ENCODE measurements at regions of chr5 and their contacts with region 1.

Region 1: GRCh38 chr5:58188262-58188651 is 271.6 kb downstream of the PLK2 start:
- DNase-seq: peak; percentile 84
- ATAC-seq: peak; percentile 63
- H3K4me3 ChIP-seq: 0 out of 2 replicates have a peak overlapping the region, but pooled peaks have one; percentile 0
- H3K27ac ChIP-seq: peak overlapping the region; percentile 64
- H3K4me1 ChIP-seq: peaks cover 84% of the 10 kb centered on the region
- H3K27me3 ChIP-seq: no peaks in the 10 kb centered on the region
- CTCF ChIP-seq: peak; percentile 26; the same call in 1 of the 2 replicates

Region 2: GRCh38 chr5:57825031-57825683 is 363.1 kb before region 1 on chr5:
- CTCF ChIA-PET with region 1: no interaction called
- POLR2A ChIA-PET with region 1: no interaction called
- intact Hi-C with region 1: loop called (anchors 10 kb)
- DNase-seq: peak; percentile 93
- ATAC-seq: peak; percentile 85
- H3K4me3 ChIP-seq: no peak overlapping the region
- H3K27ac ChIP-seq: peak overlapping the region; percentile 93
- H3K4me1 ChIP-seq: peaks cover 36% of the 10 kb centered on the region
- H3K27me3 ChIP-seq: no peaks in the 10 kb centered on the region
- CTCF ChIP-seq: no peak

Region 3: DNA sequence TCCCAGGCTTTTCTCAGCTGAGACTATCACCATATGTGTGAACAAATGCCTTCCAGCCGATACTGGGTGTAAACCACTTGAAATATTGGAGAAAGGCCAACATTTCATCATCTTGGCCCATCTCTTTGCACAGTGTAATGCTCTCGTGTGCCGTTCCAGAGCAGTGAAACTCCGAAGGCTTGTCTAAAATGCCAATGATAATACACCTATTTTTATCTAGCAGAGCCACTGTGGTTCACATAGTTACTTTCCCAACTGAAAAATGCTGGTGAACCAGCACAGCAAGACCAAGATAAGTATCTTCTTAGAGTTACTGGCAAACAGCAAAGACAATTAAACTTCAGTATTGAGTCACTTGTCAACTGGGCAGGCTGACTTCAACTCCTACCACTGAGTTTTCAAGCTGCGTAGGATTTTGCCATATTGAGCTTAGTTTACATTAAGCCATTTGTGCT is 325.8 kb before region 1 on chr5:
- CTCF ChIA-PET with region 1: no interaction called
- POLR2A ChIA-PET with region 1: no interaction called
- intact Hi-C with region 1: no loop called
- DNase-seq: peak; percentile 83
- ATAC-seq: peak; percentile 56; the same call in 1 of the 2 replicates
- H3K4me3 ChIP-seq: 0 out of 2 replicates have a peak overlapping the region, but pooled peaks have one; percentile 27
- H3K27ac ChIP-seq: peak overlapping the region; percentile 91
- H3K4me1 ChIP-seq: peaks cover 26% of the 10 kb centered on the region
- H3K27me3 ChIP-seq: no peaks in the 10 kb centered on the region
- CTCF ChIP-seq: no peak

Region 4: DNA sequence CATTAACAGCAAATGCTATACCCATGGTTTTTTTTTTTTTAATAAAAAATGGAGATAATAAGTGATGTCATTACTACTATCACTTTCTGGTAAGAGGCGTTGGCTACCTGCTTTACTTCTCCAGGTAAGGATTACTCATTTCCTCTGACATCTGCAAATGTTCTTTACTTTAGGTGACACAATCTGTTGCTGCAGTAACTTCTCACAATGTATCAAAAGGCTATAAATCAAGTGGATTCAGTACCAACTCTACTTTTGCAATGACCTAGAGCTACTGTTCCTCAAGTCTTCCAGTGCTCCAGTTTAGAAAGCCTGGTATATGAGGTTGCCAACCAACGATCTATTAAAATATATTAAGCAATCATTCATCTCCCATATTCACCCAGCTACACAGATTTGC is 142.5 kb after region 1 on chr5:
- CTCF ChIA-PET with region 1: no interaction called
- POLR2A ChIA-PET with region 1: no interaction called
- intact Hi-C with region 1: loop called (anchors 5 kb)
- DNase-seq: peak; percentile 73
- ATAC-seq: peak; percentile 41
- H3K4me3 ChIP-seq: no peak overlapping the region
- H3K27ac ChIP-seq: peak overlapping the region; percentile 86
- H3K4me1 ChIP-seq: peaks cover 31% of the 10 kb centered on the region
- H3K27me3 ChIP-seq: no peaks in the 10 kb centered on the region
- CTCF ChIP-seq: no peak

Region 5: DNA sequence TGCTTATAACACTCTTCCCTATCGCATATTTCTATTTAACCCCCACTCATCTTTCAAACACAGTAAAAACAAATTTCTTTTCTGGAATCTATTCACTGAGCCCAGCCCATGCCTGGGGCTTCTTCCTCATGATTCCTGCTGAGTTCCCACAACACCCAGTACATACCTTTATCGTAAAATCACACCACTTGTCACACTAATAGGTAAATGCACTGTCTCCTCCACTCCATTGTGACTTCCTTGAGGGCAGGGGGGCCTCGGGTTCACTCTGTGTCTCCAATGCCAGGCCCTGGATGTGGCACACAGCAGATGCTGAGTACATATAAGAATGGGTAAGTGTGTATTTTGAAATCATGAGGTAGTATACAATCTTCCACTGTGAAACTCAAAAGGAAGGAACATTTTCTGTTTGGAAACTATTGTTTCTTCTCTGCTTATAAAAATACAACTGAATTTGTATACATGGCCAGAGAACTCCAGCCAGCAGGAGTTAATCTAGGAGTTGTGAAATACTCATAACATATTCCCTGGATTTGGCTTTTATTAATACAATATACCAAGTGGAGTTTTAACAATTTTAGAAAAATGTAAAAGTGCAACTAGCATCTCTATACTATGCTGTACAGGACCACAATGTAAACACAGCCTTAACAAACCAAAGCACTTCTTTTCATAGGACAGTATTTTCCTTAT is 264.5 kb after region 1 on chr5:
- CTCF ChIA-PET with region 1: no interaction called
- POLR2A ChIA-PET with region 1: no interaction called
- intact Hi-C with region 1: loop called (anchors 2 kb)
- DNase-seq: peak; percentile 22
- ATAC-seq: peak; percentile 41
- H3K4me3 ChIP-seq: no peak overlapping the region
- H3K27ac ChIP-seq: no peak overlapping the region
- H3K4me1 ChIP-seq: peaks cover 31% of the 10 kb centered on the region
- H3K27me3 ChIP-seq: no peaks in the 10 kb centered on the region
- CTCF ChIP-seq: no peak

Measured in PC-3 (cell line).